Transverse colon (tissue), 4 donors: ENCODE measurements at regions of chr19 and their contacts with region 1.

Region 1: DNA sequence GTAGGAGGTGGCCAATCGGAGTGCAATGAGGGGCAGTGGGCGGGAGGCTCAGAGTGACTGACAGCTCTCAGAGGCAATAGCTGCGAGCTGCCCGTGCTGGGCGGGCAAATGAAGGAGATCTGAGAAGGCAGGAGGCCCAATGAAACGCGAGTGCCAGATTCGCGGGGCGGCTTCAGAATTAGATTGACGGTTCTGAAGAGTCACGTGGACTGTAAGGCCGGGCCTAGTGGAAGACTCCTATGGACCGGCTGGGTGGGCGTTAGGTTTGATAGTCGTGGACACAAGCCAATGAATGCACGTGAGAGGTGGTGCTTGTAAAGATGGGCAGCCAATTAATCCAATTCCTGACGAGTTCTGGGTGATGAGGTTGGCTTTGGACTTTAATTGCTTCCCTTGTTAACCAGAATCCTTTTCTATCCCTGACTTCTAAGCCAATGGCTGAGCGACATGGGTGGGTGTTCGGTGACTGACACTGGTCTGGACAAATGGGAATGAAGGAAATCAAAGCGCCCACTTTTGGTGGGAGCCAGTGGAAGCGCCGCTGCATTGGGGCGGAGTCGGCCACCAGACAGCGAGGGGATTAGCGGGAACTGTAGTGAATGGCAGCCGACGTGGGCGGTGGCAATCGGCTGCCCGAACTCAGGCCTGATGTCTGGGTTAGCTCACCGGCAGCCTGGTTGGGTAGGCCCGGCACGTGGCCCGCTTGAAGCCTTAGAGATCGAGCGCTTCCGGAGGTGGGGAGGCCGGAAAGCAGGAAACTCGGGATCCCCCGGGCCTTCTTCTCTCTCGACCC is 524 bp upstream of the KHSRP start:
- DNase-seq: peak; percentile 100
- H3K4me3 ChIP-seq: peak overlapping the region in 3 of 4 donors; percentile 3 to 41 (median 7)
- H3K27ac ChIP-seq: peak overlapping the region; percentile 77 to 91 (median 86)
- H3K4me1 ChIP-seq: peaks cover 8 to 29% (median 20%) of the 10 kb centered on the region in 4 donors
- H3K27me3 ChIP-seq: no peaks in the 10 kb centered on the region
- CTCF ChIP-seq: no peak
- EP300 ChIP-seq: no peak
- POLR2A ChIP-seq: no peak

Region 2: DNA sequence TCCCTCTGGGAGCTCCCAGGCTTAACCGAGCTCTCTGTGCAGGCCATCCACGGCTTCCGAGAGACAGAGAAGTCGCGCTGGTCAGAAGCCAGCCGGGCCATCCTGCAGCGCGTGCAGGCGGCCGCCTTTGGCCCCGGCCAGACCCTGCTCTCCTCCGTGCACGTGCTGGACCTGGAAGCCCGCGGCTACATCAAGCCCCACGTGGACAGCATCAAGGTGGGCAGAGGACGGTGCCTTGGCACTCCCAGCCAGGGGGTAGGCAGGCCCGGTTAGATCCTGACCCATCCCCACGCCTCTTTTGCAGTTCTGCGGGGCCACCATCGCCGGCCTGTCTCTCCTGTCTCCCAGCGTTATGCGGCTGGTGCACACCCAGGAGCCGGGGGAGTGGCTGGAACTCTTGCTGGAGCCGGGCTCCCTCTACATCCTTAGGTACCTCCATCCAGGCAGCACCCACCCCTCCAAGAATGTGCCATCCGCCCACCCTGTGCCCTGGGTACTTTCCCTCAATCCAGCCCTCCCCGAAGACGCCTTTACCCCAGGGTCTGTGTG is 50.9 kb before region 1 on chr19:
- in situ Hi-C with region 1: no loop called
- intact Hi-C with region 1: loop called (anchors 2 kb)
- DNase-seq: no peak
- H3K4me3 ChIP-seq: no peak overlapping the region
- H3K27ac ChIP-seq: peak overlapping the region; percentile 92 to 100 (median 98)
- H3K4me1 ChIP-seq: peaks cover 5 to 15% (median 9%) of the 10 kb centered on the region in 4 donors
- H3K27me3 ChIP-seq: no peaks in the 10 kb centered on the region
- CTCF ChIP-seq: no peak
- EP300 ChIP-seq: no peak
- POLR2A ChIP-seq: no peak

Region 3: GRCh38 chr19:6393074-6393983 is 31.8 kb before region 1 on chr19 and contains the start of gene GTF2F1:
- in situ Hi-C with region 1: no loop called
- intact Hi-C with region 1: loop called (anchors 1 kb)
- DNase-seq: peak; percentile 93
- H3K4me3 ChIP-seq: peak within 1 kb of the TSS; percentile 62 to 93 (median 82)
- H3K27ac ChIP-seq: peak within 1 kb of the TSS; percentile 89 to 98 (median 94)
- H3K4me1 ChIP-seq: peaks cover 5 to 18% (median 8%) of the 10 kb centered on the region in 4 donors
- H3K27me3 ChIP-seq: no peaks in the 10 kb centered on the region
- CTCF ChIP-seq: peak in 3 of 5 experiments; percentile 14 to 31 (median 17)
- EP300 ChIP-seq: no peak
- POLR2A ChIP-seq: peak; percentile 48
- total RNA-seq, gene GTF2F1: 42.2 to 166 (median 56.1) TPM

Region 4: DNA sequence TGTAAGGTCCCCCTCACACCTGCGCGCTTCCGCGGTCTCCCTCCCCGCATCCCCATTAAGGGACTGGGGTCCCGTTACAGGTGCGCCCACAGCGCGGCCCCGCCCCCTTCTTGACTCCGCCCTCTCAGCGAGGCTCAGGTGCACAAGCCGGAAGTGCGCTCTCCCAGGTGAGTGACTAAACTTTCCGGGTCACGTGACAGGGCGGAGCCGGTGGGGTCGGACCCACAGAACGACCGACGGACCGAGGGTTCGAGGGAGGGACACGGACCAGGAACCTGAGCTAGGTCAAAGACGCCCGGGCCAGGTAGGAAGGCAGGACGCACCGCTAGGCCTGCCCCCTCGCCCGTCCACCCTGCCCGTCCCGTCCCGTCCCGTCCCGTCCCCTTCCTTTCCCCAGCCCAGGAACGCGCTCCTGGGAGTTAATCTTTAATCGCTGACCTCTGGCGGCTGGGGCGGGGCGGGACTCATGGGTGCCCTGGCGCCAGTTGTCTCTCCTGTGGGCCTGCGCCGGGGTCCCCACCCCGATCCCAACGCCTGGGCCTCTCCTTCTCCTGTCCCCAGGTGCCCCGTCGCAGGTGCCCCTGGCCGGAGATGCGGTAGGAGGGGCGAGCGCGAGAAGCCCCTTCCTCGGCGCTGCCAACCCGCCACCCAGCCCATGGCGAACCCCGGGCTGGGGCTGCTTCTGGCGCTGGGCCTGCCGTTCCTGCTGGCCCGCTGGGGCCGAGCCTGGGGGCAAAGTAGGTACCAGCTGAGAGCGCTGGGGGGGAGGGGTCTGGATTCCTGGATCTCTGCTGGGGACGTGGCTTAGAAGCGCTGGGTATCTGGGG is 39.1 kb after region 1 on chr19 and contains the start of gene CRB3:
- in situ Hi-C with region 1: no loop called
- intact Hi-C with region 1: no loop called
- DNase-seq: peak; percentile 97
- H3K4me3 ChIP-seq: peak within 1 kb of the TSS; percentile 25 to 57 (median 52)
- H3K27ac ChIP-seq: peak within 1 kb of the TSS; percentile 83 to 89 (median 86)
- H3K4me1 ChIP-seq: peaks cover 0 to 21% (median 14%) of the 10 kb centered on the region in 4 donors
- H3K27me3 ChIP-seq: peaks cover 15% of the 10 kb centered on the region
- CTCF ChIP-seq: no peak
- EP300 ChIP-seq: no peak
- POLR2A ChIP-seq: peak; percentile 84
- total RNA-seq, gene CRB3: 57.9 to 391 (median 229) TPM

Region 5: GRCh38 chr19:7629347-7630054 is 1204.4 kb after region 1 on chr19 and contains the starts of genes PET100 and XAB2:
- in situ Hi-C with region 1: no loop called
- intact Hi-C with region 1: loop called (anchors 10 kb)
- DNase-seq: peak; percentile 97
- H3K4me3 ChIP-seq: peak within 1 kb of the TSS; percentile 68 to 99 (median 80)
- H3K27ac ChIP-seq: peak within 1 kb of the TSS; percentile 78 to 90 (median 84)
- H3K4me1 ChIP-seq: peaks cover 15 to 29% (median 24%) of the 10 kb centered on the region in 4 donors
- H3K27me3 ChIP-seq: no peaks in the 10 kb centered on the region
- CTCF ChIP-seq: no peak
- EP300 ChIP-seq: no peak
- POLR2A ChIP-seq: peak; percentile 64
- total RNA-seq, gene PET100: 16.4 to 48.0 TPM in 2 of 4 donors, not detected in the others
- total RNA-seq, gene XAB2: 27.8 to 123 (median 57.3) TPM